ENCODE measurements at regions of chr1 and their contacts with region 1.

Region 1: GRCh38 chr1:180027949-180028445 is 73.4 kb downstream of the CEP350 start:
- DNase-seq: peak; percentile 16
- H3K4me3 ChIP-seq: no peak overlapping the region
- H3K27ac ChIP-seq: no peak overlapping the region
- H3K27me3 ChIP-seq: no peaks in the 10 kb centered on the region
- CTCF ChIP-seq: no peak

Region 2: DNA sequence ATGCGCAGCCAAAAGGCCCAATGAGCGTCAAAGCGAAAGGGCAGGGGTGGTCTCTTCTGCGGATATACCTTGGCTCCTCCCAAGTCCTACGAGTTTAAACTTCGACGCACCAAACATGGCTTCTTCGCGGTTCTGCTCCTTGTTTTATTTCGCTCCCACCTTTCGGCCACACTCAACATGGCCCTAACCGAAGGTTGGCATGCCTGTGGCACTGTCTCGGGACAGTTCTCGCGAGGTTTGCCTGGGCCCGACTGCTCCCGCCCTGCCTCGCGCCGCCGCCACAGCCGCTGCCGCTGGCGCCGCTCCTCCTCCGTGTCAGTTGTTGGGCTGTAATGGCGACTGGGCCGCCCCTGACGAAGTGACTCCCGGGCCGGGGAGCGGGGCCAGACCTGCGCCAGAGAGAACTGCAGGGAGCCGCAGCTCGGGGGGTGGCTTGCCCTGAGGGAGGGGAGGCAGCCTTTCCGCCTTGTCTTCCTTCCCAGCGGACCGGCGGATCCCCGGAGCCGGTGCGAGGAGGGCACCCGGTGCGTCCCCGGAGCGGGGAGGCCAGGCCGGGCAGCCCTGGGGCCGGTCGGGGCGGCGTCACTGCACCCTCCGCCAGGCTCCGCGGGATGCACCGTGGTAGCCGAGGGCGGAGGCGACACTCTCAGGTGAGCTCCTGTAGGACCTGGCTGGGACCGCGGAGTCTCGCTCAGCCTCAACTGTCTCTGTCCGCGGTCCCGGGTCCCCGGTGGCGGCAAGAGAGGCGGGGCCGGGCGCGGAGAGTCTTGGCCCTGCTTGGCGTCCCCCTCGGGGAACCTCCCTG is 73.3 kb before region 1 on chr1 and contains the start of gene CEP350:
- CTCF ChIA-PET with region 1: no interaction called
- POLR2A ChIA-PET with region 1: no interaction called
- DNase-seq: peak; percentile 99
- H3K4me3 ChIP-seq: peak within 1 kb of the TSS; percentile 93
- H3K27ac ChIP-seq: peak within 1 kb of the TSS; percentile 74
- H3K27me3 ChIP-seq: no peaks in the 10 kb centered on the region
- CTCF ChIP-seq: 0 out of 2 replicates have a peak, but pooled peaks have one; percentile 2
- polyA plus RNA-seq, gene CEP350: 12.9 and 18.2 TPM in 2 replicates

Region 3: GRCh38 chr1:180042988-180043622 is 15.1 kb after region 1 on chr1:
- CTCF ChIA-PET with region 1: interaction called, 3 read pairs
- POLR2A ChIA-PET with region 1: interaction called, 10 read pairs
- DNase-seq: peak; percentile 42
- H3K4me3 ChIP-seq: no peak overlapping the region
- H3K27ac ChIP-seq: peak overlapping the region; percentile 53
- H3K27me3 ChIP-seq: no peaks in the 10 kb centered on the region
- CTCF ChIP-seq: no peak

Region 4: DNA sequence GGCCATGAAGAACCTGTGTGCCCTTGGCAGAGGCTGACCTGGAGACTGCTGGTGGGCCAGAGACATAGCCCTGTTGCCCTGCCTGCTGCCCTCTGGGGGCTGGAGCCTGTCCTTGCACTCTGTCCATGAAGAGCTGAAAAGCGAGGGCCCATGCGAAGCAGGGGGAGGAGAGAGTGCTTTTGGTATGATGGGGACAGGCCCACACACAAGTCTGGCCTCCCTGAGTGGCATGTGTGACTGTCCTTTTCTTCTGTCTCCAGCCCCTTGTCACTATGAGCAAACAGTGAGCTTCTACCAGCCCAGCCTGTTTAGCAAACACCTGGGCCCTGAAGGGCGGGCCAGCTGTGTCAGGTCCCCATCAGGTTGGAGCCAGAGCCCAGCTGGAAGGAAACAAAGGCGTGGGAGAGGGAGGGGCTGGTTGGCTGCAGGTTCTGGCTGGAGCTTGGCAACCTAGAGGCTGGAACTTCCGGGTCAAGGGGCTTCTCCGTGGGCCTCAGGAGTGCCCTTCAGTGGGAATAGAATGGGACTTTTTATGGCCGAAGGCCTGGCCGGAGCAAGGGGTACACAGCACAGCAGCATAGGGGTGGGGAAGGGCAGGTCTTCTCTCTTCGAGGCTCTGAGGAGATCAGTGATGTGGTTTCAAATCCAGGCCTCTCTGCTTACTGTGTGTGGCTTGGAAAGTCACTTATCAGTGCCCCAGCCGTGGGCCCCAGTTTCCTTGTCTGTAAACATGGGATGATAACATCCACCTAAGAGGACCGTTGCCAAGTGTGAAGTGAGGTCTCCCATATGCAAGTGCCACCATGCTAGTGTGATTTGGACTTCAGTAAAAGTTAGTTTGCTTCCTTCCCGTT is 141.0 kb after region 1 on chr1:
- CTCF ChIA-PET with region 1: no interaction called
- POLR2A ChIA-PET with region 1: no interaction called
- DNase-seq: no peak
- H3K4me3 ChIP-seq: no peak overlapping the region
- H3K27ac ChIP-seq: peak overlapping the region; percentile 11
- H3K27me3 ChIP-seq: no peaks in the 10 kb centered on the region
- CTCF ChIP-seq: peak; percentile 54